Activated CD8-positive, alpha-beta memory T cell treated with anti-CD3 and anti-CD28 coated beads, Interleukin-2, amount 10 ng/mL, durations not matched to agents 7 days and 5 days (primary cell): ENCODE measurements at regions of chr5 and their contacts with region 1.

Region 1: GRCh38 chr5:149567226-149567625 is 14.1 kb upstream of the ARHGEF37 start:
- DNase-seq: no peak
- ATAC-seq: no peak
- H3K4me3 Mint-ChIP-seq: no peak overlapping the region
- H3K27ac Mint-ChIP-seq: no peak overlapping the region
- H3K4me1 Mint-ChIP-seq: no peaks in the 10 kb centered on the region
- H3K27me3 Mint-ChIP-seq: no peaks in the 10 kb centered on the region

Region 2: GRCh38 chr5:149212198-149212951 is 354.9 kb before region 1 on chr5:
- CTCF ChIA-PET with region 1: no interaction called
- DNase-seq: peak; percentile 14
- ATAC-seq: no peak
- H3K4me3 Mint-ChIP-seq: no peak overlapping the region
- H3K27ac Mint-ChIP-seq: no peak overlapping the region
- H3K4me1 Mint-ChIP-seq: no peaks in the 10 kb centered on the region
- H3K27me3 Mint-ChIP-seq: no peaks in the 10 kb centered on the region

Region 3: DNA sequence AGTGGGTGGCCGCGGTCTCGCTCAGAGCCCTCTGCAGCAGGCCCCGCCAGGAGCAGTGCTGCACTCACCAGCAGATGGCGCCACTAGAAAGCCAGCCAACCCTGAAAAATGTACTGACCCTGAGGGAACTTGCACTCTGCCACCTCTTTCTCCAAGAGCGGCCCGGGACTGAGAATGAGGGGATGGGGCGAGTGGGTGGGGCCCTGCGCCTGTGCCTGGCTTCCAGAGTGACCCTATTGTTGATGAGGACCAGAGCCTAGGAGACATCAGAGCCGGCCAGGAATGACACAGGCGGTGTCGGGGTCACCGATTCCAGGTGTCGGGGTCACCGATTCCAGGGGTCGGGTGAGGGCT is 185.3 kb before region 1 on chr5:
- CTCF ChIA-PET with region 1: interaction called, 30 read pairs
- DNase-seq: peak; percentile 77
- ATAC-seq: peak; percentile 86
- H3K4me3 Mint-ChIP-seq: no peak overlapping the region
- H3K27ac Mint-ChIP-seq: no peak overlapping the region
- H3K4me1 Mint-ChIP-seq: no peaks in the 10 kb centered on the region
- H3K27me3 Mint-ChIP-seq: no peaks in the 10 kb centered on the region

Region 4: GRCh38 chr5:149455889-149456409 is 111.3 kb before region 1 on chr5:
- CTCF ChIA-PET with region 1: no interaction called
- DNase-seq: no peak
- ATAC-seq: no peak
- H3K4me3 Mint-ChIP-seq: no peak overlapping the region
- H3K27ac Mint-ChIP-seq: no peak overlapping the region
- H3K4me1 Mint-ChIP-seq: peaks cover 2% of the 10 kb centered on the region
- H3K27me3 Mint-ChIP-seq: no peaks in the 10 kb centered on the region